CD14-positive monocyte (primary cell): ENCODE measurements at regions of chr22 and their contacts with region 1.

Region 1: GRCh38 chr22:30386960-30387827 is at the start of gene RNF215:
- DNase-seq: peak; percentile 76 to 82 (median 81)
- H3K4me3 ChIP-seq: peak within 1 kb of the TSS; percentile 14 to 75 (median 51)
- H3K4me3 Mint-ChIP-seq: peak within 1 kb of the TSS; percentile 82 to 88
- H3K27ac ChIP-seq: no peak within 1 kb of the TSS
- H3K27ac Mint-ChIP-seq: peak within 1 kb of the TSS in 6 of 7 donors; percentile 60 to 88 (median 80)
- H3K4me1 ChIP-seq: peaks cover 10% of the 10 kb centered on the region in 2 donors
- H3K4me1 Mint-ChIP-seq: peaks cover 14% of the 10 kb centered on the region
- H3K27me3 ChIP-seq: no peaks in the 10 kb centered on the region
- H3K27me3 Mint-ChIP-seq: peaks cover 3 to 8% (median 4%) of the 10 kb centered on the region in 3 donors
- CTCF ChIP-seq: peak; percentile 97
- polyA plus RNA-seq, gene RNF215: 0.26 to 12.2 (median 0.42) TPM

Region 2: GRCh38 chr22:30104501-30105156 is 282.6 kb before region 1 on chr22:
- intact Hi-C with region 1: loop called (anchors 5 kb)
- DNase-seq: no peak
- H3K4me3 ChIP-seq: no peak overlapping the region
- H3K4me3 Mint-ChIP-seq: peak overlapping the region in 1 of 2 donors; percentile 11
- H3K27ac ChIP-seq: no peak overlapping the region
- H3K27ac Mint-ChIP-seq: no peak overlapping the region
- H3K4me1 ChIP-seq: no peaks in the 10 kb centered on the region
- H3K4me1 Mint-ChIP-seq: peaks cover 6% of the 10 kb centered on the region
- H3K27me3 ChIP-seq: no peaks in the 10 kb centered on the region
- H3K27me3 Mint-ChIP-seq: peaks cover 0 to 3% (median 2%) of the 10 kb centered on the region in 3 donors
- CTCF ChIP-seq: no peak

Region 3: GRCh38 chr22:30356449-30357235 is 30.6 kb before region 1 on chr22 and contains the starts of genes CCDC157 and SF3A1:
- intact Hi-C with region 1: loop called in 1 of 2 experiments (anchors 2 kb)
- DNase-seq: peak; percentile 87 to 89 (median 88)
- H3K4me3 ChIP-seq: peak within 1 kb of the TSS; percentile 71 to 94 (median 87)
- H3K4me3 Mint-ChIP-seq: peak within 1 kb of the TSS; percentile 93 to 94
- H3K27ac ChIP-seq: peak within 1 kb of the TSS; percentile 77 to 95
- H3K27ac Mint-ChIP-seq: peak within 1 kb of the TSS; percentile 86 to 93 (median 90)
- H3K4me1 ChIP-seq: peaks cover 25 to 28% of the 10 kb centered on the region in 2 donors
- H3K4me1 Mint-ChIP-seq: peaks cover 31% of the 10 kb centered on the region
- H3K27me3 ChIP-seq: peaks cover 0 to 3% of the 10 kb centered on the region in 2 donors
- H3K27me3 Mint-ChIP-seq: peaks cover 0 to 18% (median 14%) of the 10 kb centered on the region in 3 donors
- CTCF ChIP-seq: no peak
- polyA plus RNA-seq, gene CCDC157: 0.50 to 3.7 (median 0.54) TPM
- polyA plus RNA-seq, gene SF3A1: 34.7 to 102 (median 52.1) TPM

Region 4: DNA sequence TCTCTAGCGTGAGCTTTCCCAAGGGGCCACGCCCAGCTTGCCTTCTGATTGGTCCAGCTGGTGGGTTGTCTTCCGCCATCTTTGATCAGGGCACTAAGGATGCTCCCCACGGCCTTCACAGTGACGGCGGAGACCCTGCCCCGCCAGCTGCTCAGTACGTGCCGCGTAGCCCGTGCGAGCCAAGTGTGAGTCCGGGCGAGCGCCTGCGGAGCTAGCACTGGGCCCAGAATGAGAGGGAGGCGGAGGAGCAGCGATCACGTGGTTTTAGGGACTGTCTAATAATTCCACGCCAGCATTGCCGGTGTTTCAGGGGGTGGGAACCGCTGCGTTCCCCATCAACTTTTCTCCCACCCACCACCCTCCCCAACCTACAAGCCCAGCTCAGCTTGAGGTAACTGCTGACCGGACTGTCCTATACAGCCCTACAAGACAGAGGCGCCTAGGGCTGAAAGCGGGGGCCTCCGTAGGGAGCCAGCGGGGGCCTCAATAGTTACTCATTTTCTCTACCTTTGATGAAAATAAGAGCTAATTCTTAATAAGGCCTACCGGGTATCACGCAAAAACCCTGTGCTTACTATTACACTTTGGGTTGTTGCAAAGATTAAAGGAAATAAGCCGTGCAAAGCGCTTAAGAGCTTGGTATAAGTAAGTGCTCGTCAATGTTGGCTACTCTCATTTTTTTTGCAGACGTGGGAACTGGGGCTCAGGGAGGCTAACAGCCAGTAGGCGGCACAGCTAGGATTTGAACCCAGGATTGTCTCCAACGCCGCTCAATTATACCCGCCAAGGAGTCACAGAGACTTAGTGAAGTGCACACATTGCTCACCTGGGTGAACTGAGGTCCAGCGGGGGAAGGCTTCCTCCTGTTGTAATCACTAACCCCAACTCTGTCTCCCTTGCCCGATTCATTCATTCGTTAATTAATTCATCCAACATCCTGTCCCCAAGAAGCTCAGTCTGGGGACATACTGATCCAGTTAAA is 37.1 kb after region 1 on chr22:
- intact Hi-C with region 1: loop called (anchors 5 kb)
- DNase-seq: peak; percentile 99 to 100 (median 99)
- H3K4me3 ChIP-seq: peak overlapping the region; percentile 54 to 88 (median 78)
- H3K4me3 Mint-ChIP-seq: peak overlapping the region; percentile 92 to 96
- H3K27ac ChIP-seq: peak overlapping the region; percentile 81 to 97
- H3K27ac Mint-ChIP-seq: peak overlapping the region; percentile 93 to 98 (median 97)
- H3K4me1 ChIP-seq: peaks cover 40 to 46% of the 10 kb centered on the region in 2 donors
- H3K4me1 Mint-ChIP-seq: peaks cover 40% of the 10 kb centered on the region
- H3K27me3 ChIP-seq: no peaks in the 10 kb centered on the region
- H3K27me3 Mint-ChIP-seq: peaks cover 0 to 2% (median 0%) of the 10 kb centered on the region in 3 donors
- CTCF ChIP-seq: no peak

Region 5: GRCh38 chr22:30485362-30485988 is 98.3 kb after region 1 on chr22:
- intact Hi-C with region 1: loop called (anchors 1 kb)
- DNase-seq: peak; percentile 47 to 68 (median 55)
- H3K4me3 ChIP-seq: no peak overlapping the region
- H3K4me3 Mint-ChIP-seq: no peak overlapping the region
- H3K27ac ChIP-seq: no peak overlapping the region
- H3K27ac Mint-ChIP-seq: peak overlapping the region in 1 of 7 donors; percentile 51
- H3K4me1 ChIP-seq: no peaks in the 10 kb centered on the region
- H3K4me1 Mint-ChIP-seq: no peaks in the 10 kb centered on the region
- H3K27me3 ChIP-seq: no peaks in the 10 kb centered on the region
- H3K27me3 Mint-ChIP-seq: peaks cover 4 to 16% (median 14%) of the 10 kb centered on the region in 3 donors
- CTCF ChIP-seq: peak; percentile 94